ENCODE measurements at regions of chr4 and their contacts with region 1.

Region 1: GRCh38 chr4:88284439-88285234 is at the start of gene PPM1K:
- DNase-seq: peak; percentile 100
- H3K4me3 ChIP-seq: peak within 1 kb of the TSS; percentile 57 to 76 (median 69)
- H3K27ac ChIP-seq: peak within 1 kb of the TSS; percentile 97 to 99 (median 99)
- H3K4me1 ChIP-seq: peaks cover 12 to 50% (median 32%) of the 10 kb centered on the region in 4 donors
- H3K27me3 ChIP-seq: no peaks in the 10 kb centered on the region
- CTCF ChIP-seq: peak in 2 of 7 experiments; percentile 8 to 15
- EP300 ChIP-seq: no peak
- POLR2A ChIP-seq: peak in 2 of 4 donors; percentile 82 to 90
- total RNA-seq, gene PPM1K: 13.0 to 81.7 (median 40.4) TPM

Region 2: DNA sequence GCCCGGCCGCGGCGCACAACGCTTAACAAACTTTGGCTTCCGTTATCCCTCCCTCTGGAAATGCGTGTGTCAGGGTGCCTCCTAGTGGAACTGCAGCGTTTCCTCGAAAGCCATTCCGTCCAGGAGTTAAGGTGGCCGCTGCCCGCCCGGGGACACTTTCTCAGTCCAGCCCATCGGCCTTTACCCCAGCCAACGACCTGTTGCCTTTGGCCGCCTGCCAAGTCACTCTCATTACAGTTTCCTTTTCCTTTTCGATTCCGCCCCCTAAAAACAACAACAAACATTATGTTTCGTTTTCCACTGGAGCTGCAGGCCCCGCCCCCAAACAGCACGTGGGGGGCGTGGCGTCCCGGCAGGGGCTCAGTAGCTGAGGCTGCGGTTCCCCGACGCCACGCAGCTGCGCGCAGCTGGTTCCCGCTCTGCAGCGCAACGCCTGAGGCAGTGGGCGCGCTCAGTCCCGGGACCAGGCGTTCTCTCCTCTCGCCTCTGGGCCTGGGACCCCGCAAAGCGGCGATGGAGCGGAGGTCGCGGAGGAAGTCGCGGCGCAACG is 172.2 kb after region 1 on chr4 and contains the start of gene HERC5:
- intact Hi-C with region 1: loop called (anchors 10 kb)
- DNase-seq: peak; percentile 94 to 96
- H3K4me3 ChIP-seq: peak within 1 kb of the TSS; percentile 67 to 84 (median 79)
- H3K27ac ChIP-seq: peak within 1 kb of the TSS; percentile 82 to 90 (median 87)
- H3K4me1 ChIP-seq: peaks cover 0 to 22% (median 9%) of the 10 kb centered on the region in 4 donors
- H3K27me3 ChIP-seq: no peaks in the 10 kb centered on the region
- CTCF ChIP-seq: peak in 5 of 7 experiments; percentile 37 to 87 (median 63)
- EP300 ChIP-seq: no peak
- POLR2A ChIP-seq: no peak
- total RNA-seq, gene HERC5: 1.7 to 11.6 (median 6.3) TPM in 4 of 5 donors, not detected in the other

Region 3: GRCh38 chr4:88523325-88524129 is 238.9 kb after region 1 on chr4 and contains the start of gene PYURF:
- intact Hi-C with region 1: loop called (anchors 10 kb)
- DNase-seq: peak; percentile 97
- H3K4me3 ChIP-seq: peak within 1 kb of the TSS; percentile 77 to 90 (median 84)
- H3K27ac ChIP-seq: peak within 1 kb of the TSS; percentile 77 to 95 (median 93)
- H3K4me1 ChIP-seq: peaks cover 9 to 44% (median 25%) of the 10 kb centered on the region in 4 donors
- H3K27me3 ChIP-seq: no peaks in the 10 kb centered on the region
- CTCF ChIP-seq: no peak
- EP300 ChIP-seq: no peak
- POLR2A ChIP-seq: peak in 2 of 4 donors; percentile 12 to 37
- total RNA-seq, gene PYURF: 11.7 to 296 (median 97.1) TPM